A549 (cell line): ENCODE measurements at regions of chr1 and their contacts with region 1.

Region 1: GRCh38 chr1:94335950-94336349 is 82.2 kb upstream of the ABCD3 start:
- DNase-seq: peak; percentile 18 to 89
- ATAC-seq: peak; percentile 89 to 94
- H3K4me3 ChIP-seq: no peak overlapping the region
- H3K27ac ChIP-seq: peak overlapping the region; percentile 38 to 55; a peak in 2 of 6 replicates
- H3K4me1 ChIP-seq: peaks cover 22% of the 10 kb centered on the region
- CTCF ChIP-seq: peak; percentile 99
- EP300 ChIP-seq: no peak
- POLR2A ChIP-seq: no peak
- RAD21 ChIP-seq: peak; percentile 99

Region 2: GRCh38 chr1:94061513-94062443 is 274.2 kb before region 1 on chr1:
- CTCF ChIA-PET with region 1: interaction called, 284 read pairs
- POLR2A ChIA-PET with region 1: no interaction called
- DNase-seq: peak; percentile 67 to 87
- ATAC-seq: peak; percentile 93 to 97
- H3K4me3 ChIP-seq: no peak overlapping the region
- H3K27ac ChIP-seq: peak overlapping the region; percentile 72 to 78
- H3K4me1 ChIP-seq: peaks cover 21% of the 10 kb centered on the region
- CTCF ChIP-seq: peak; percentile 76
- EP300 ChIP-seq: no peak
- POLR2A ChIP-seq: no peak
- RAD21 ChIP-seq: peak; percentile 91 to 93

Region 3: GRCh38 chr1:94191216-94191615 is 144.7 kb before region 1 on chr1:
- CTCF ChIA-PET with region 1: interaction called, 10 read pairs
- POLR2A ChIA-PET with region 1: no interaction called
- DNase-seq: no peak
- ATAC-seq: no peak
- H3K4me3 ChIP-seq: no peak overlapping the region
- H3K27ac ChIP-seq: no peak overlapping the region
- H3K4me1 ChIP-seq: no peaks in the 10 kb centered on the region
- CTCF ChIP-seq: no peak
- EP300 ChIP-seq: no peak
- POLR2A ChIP-seq: no peak
- RAD21 ChIP-seq: no peak

Region 4: DNA sequence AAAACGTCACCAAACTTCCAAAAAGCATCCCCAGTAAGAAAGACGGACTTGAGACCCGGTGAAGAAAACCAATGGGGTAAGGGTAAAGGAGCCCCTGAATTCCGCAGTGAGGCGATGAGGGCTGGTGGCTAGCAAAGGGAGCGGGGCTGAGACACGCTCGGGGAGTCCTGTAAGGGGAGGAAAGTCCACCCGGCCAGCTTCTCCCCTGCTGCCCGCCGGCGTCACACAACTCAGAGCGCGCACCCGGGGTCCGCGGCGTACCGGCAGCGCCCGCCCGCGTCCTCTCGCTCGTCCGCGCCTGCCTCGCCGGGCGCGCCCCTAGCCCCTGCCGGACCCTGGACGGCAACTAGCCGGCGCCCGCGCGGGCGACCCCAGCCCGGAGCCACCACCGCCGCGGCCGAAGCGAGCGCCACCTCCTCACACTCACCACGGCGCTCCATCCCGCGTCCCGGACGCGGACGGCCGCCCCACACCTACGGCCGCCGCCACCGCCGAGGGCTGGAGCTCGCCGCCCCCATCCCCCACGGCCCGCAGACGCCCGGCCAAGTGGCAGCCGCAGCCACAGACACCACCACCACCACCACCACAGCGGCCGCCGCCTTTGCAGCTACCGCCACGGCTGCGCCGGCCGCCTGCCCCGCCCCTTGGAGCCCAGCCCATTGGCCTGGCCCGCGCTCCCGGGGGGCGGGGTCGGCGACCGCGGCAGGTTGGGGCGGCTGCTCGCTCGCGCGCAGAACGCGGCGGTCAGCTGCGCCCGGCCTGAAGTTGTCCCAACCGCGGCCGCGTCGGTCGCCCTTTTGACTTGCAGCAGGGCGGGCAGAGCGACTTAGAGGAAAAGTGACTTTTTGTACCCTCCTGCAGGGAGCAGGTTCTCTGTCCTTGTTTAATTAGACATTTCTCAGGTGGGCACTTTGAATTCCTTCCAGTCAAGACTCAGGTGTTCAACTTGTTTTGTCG is 88.5 kb before region 1 on chr1:
- CTCF ChIA-PET with region 1: interaction called, 19 read pairs
- POLR2A ChIA-PET with region 1: no interaction called
- DNase-seq: peak; percentile 43 to 68
- ATAC-seq: peak; percentile 91 to 92
- H3K4me3 ChIP-seq: peak overlapping the region; percentile 75
- H3K27ac ChIP-seq: peak overlapping the region; percentile 81 to 98
- H3K4me1 ChIP-seq: peaks cover 24% of the 10 kb centered on the region
- CTCF ChIP-seq: 0 out of 3 replicates have a peak, but pooled peaks have one; percentile 5
- EP300 ChIP-seq: no peak
- POLR2A ChIP-seq: no peak
- RAD21 ChIP-seq: no peak; a peak in 1 of 5 replicates

Region 5: DNA sequence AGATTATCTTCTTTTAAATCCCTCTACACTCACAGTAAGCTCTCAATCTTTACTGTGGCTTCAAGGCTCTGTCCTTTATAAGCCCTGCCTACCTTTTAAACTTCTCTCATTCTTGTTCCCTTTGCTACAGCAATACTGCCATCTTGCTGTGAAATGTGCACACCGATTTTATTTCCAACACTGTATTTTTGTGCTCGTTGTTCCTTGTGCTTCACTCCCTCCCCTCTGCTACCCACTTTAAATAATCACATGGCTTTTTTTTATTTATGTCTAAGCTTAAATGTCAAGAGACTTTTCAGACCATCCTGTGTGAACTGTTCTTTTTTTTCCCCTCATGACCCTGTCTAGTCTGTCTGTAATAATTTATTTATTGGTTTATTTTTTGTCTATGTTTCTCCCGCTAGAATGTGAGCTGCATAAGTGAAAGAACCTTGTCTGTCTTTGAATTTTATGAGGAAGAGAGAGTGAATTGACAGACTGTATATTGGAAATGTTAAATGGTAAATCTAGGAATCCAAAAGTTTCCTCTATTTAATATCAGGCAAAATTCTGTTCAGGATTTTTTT is 127.9 kb after region 1 on chr1:
- CTCF ChIA-PET with region 1: interaction called, 69 read pairs
- POLR2A ChIA-PET with region 1: no interaction called
- DNase-seq: peak; percentile 14 to 66
- ATAC-seq: peak; percentile 89 to 92
- H3K4me3 ChIP-seq: no peak overlapping the region
- H3K27ac ChIP-seq: peak overlapping the region in 1 of 2 experiments; percentile 40; a peak in 1 of 6 replicates
- H3K4me1 ChIP-seq: peaks cover 10% of the 10 kb centered on the region
- CTCF ChIP-seq: peak; percentile 81
- EP300 ChIP-seq: no peak
- POLR2A ChIP-seq: no peak
- RAD21 ChIP-seq: peak; percentile 86 to 92